ENCODE measurements at regions of chrX and their contacts with region 1.

Region 1: DNA sequence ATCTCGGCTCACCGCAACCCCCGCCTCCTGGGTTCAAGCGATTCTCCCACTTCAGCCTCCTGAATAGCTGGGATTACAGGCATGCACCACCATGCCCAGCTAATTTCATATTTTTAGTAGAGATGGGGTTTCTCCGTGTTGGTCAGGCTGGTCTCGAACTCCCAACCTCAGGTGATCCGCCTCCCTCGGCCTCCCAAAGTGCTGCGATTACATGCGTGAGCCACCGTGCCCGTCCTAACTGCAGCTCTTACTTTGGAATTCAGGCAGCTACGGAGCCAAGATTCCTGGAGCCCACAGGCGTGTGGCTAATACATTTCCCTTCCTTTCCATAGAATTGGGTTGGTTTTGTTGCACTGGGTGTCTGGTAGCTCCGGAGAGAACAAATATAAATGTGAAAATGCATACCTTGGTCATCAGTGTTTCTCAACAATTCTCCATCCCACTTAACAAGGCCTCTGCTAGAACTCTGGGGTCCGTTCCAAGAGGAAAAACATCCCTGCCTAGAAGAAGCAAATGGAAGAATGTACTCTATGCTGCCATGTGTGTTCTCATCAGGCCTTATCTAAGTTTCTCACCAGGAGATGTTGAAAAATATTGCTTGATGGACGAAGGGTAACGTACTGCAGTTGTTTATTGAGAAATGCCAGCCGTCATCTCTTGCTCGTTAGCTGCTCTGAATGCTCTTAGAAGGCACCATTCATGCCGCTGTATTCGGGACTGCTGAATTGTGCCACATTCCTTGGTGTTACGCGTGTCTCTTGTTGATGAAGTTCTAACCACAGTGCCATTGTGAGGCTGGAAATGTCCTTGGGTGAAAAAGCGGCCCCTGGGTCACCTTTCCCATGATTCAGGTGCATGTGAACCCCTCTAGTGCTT is 50.6 kb upstream of the CD99 start:
- DNase-seq: no peak

Region 2: GRCh38 chrX:2811271-2811670 is 170.8 kb after region 1 on chrX:
- intact Hi-C with region 1: loop called (anchors 5 kb)
- DNase-seq: no peak